A673 (cell line): ENCODE measurements at regions of chr14 and their contacts with region 1.

Region 1: DNA sequence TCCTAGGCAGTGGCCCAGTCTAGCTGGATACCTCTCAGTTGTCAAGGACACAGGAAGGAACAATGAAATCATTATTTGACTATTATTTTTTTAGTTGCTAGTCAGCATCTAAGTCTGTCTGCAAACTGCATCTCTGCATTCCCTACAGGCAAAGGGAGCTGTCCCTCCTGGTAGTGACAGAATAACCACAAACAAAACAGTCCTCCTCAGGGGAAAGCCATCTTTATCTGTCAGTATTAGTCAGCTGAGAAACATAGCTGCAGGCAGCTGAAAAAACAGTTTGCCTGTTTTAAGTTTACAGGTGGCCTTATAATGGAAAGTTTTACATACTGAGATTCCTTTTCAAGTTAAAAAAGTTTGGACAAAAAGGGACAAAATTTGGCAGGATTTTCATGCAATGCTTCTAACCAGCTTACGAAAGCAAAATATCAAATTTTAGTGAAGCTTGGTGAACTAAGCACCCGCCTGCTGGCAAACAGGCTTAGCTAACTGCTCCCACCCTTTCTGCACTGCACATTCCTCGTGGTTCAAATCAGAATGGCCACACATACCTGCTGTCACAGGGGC is 29.5 kb downstream of the SLC25A21 start:
- DNase-seq: no peak
- H3K4me3 ChIP-seq: no peak overlapping the region
- H3K27ac ChIP-seq: no peak overlapping the region
- H3K4me1 ChIP-seq: no peaks in the 10 kb centered on the region
- H3K27me3 ChIP-seq: no peaks in the 10 kb centered on the region
- CTCF ChIP-seq: no peak

Region 2: GRCh38 chr14:36207500-36207899 is 935.4 kb before region 1 on chr14:
- CTCF ChIA-PET with region 1: no interaction called
- POLR2A ChIA-PET with region 1: no interaction called
- intact Hi-C with region 1: loop called (anchors 10 kb)
- DNase-seq: peak; percentile 6
- H3K4me3 ChIP-seq: no peak overlapping the region
- H3K27ac ChIP-seq: no peak overlapping the region
- H3K4me1 ChIP-seq: no peaks in the 10 kb centered on the region
- H3K27me3 ChIP-seq: peaks cover 12% of the 10 kb centered on the region
- CTCF ChIP-seq: peak; percentile 47

Region 3: GRCh38 chr14:36724162-36724561 is 418.8 kb before region 1 on chr14:
- CTCF ChIA-PET with region 1: interaction called, 13 read pairs
- POLR2A ChIA-PET with region 1: no interaction called
- intact Hi-C with region 1: no loop called
- DNase-seq: no peak
- H3K4me3 ChIP-seq: no peak overlapping the region
- H3K27ac ChIP-seq: no peak overlapping the region
- H3K4me1 ChIP-seq: no peaks in the 10 kb centered on the region
- H3K27me3 ChIP-seq: no peaks in the 10 kb centered on the region
- CTCF ChIP-seq: no peak